ENCODE measurements at regions of chr1 and their contacts with region 1.

Region 1: GRCh38 chr1:167715157-167715999 is 6.4 kb upstream of the MPZL1 start:
- DNase-seq: peak; percentile 77 to 90
- ATAC-seq: peak; percentile 47

Region 2: GRCh38 chr1:167797015-167797414 is 81.6 kb after region 1 on chr1:
- intact Hi-C with region 1: no loop called
- DNase-seq: peak in 1 of 2 donors; percentile 67
- ATAC-seq: peak; percentile 47

Region 3: DNA sequence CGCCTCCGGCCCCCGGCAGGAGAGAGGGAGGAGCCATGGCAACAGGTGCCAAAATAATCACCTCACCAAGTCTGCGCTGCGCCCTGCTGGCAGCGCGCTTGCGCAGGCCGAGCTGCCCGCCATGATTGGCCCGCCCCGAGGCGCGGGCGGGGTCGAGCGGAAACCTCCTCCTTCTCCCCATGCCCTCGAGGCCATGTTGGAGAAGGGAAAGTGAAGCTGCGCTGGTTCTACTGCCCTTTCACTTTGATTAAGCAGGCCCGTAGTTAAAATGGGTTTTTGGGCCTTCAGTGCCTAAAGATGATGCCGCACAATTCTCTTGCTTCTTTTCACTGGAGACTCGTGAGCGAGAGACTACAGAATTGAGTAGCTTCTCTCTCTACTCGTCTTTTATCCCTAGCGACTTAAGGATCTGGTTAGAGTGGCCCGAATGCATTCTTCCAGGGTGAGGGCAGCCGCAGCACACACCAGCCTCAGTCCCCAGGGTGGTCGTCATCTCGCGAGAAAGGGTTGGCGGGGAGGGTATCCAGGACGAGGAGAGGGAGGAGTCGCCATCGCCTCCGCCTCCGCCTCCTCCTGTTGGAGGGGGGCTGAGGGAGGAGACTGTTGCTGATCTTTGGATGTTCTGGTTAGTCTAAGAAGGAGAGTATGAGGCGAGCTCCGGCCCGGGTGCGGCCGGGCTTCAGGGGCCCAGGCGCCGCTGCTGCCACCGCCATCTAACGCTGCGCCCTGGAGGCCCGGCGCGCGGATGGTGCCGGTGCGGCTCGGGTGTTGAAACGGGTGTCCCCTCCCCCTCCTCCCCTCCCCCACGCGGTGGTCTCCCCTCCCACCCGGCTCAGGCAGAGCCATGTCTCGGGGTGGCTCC is 220.9 kb after region 1 on chr1 and contains the start of gene DCAF6:
- intact Hi-C with region 1: loop called in 1 of 2 experiments (anchors 10 kb)
- DNase-seq: peak; percentile 95 to 98
- ATAC-seq: peak; percentile 83
- total RNA-seq, gene DCAF6: 60.0 to 60.2 TPM

Measured in left colon (tissue), 2 donors.